ENCODE measurements at regions of chr20 and their contacts with region 1.

Region 1: GRCh38 chr20:17504898-17505635 is 26.1 kb downstream of the BFSP1 start:
- DNase-seq: peak; percentile 47
- ATAC-seq: peak; percentile 90
- H3K4me3 ChIP-seq: peak overlapping the region; percentile 36 to 54
- H3K27ac ChIP-seq: peak overlapping the region; percentile 79
- H3K4me1 ChIP-seq: peaks cover 13% of the 10 kb centered on the region; the same call in 1 of the 2 replicates
- H3K27me3 ChIP-seq: no peaks in the 10 kb centered on the region
- CTCF ChIP-seq: peak; percentile 76

Region 2: DNA sequence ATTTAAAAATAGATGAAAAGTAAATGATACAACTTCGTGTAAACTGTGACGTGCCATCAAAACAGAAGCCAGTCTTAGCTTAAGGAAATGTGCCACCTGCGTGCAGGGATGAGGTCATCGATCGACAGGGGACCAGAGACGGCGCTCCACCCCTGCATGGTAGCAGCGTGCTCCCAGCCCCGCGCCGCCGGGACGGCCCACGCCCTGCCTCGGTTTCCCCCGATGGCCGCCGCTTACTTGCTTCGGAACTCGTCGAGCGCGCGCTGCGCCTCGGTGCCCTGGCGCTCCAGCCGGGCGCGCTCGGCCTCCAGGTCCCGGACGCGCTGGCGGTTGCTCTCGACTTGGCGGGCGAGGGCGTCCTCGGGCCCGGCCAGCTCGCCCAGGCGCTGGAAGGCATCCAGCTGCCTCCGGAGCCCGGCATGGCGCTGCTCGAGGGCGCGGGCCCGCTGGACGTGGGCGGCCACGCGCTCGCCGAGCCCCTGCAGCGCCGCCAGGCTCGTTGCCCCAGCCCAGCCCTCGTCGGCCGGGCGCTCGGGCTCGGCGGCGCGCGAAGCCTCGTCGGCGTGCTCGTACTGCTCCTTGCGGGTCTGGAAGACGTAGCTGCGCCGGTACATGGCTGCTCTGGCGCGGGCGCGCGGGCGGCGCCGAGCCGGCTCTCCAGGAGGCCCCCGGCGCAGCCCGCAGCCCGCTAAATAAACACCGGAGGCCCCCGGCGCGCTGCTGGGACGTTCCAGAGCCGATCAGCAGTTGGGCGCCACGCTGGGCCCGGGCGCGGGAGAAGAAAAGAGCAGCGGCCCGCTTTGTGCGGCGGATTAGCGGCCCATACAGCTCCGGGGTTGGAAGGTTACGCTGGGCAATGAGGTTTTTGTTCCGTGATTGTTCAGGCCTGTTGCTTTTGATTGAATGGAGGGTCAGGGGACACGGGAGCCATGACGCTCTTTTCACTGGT is 25.9 kb after region 1 on chr20 and contains the start of gene BFSP1:
- CTCF ChIA-PET with region 1: no interaction called
- POLR2A ChIA-PET with region 1: no interaction called
- in situ Hi-C with region 1: no loop called
- intact Hi-C with region 1: no loop called
- DNase-seq: no peak
- ATAC-seq: peak; percentile 89
- H3K4me3 ChIP-seq: peak within 1 kb of the TSS; percentile 51 to 77
- H3K27ac ChIP-seq: peak within 1 kb of the TSS; percentile 88
- H3K4me1 ChIP-seq: peaks cover 24% of the 10 kb centered on the region
- H3K27me3 ChIP-seq: no peaks in the 10 kb centered on the region
- CTCF ChIP-seq: peak; percentile 13; the same call in 1 of the 2 replicates
- total RNA-seq, gene BFSP1: 6.9 TPM

Region 3: GRCh38 chr20:17617551-17618223 is 112.6 kb after region 1 on chr20:
- CTCF ChIA-PET with region 1: interaction called, 4 read pairs
- POLR2A ChIA-PET with region 1: no interaction called
- in situ Hi-C with region 1: no loop called
- intact Hi-C with region 1: loop called (anchors 1 kb)
- DNase-seq: peak; percentile 13
- ATAC-seq: peak; percentile 68
- H3K4me3 ChIP-seq: no peak overlapping the region
- H3K27ac ChIP-seq: no peak overlapping the region
- H3K4me1 ChIP-seq: peaks cover 29% of the 10 kb centered on the region
- H3K27me3 ChIP-seq: no peaks in the 10 kb centered on the region
- CTCF ChIP-seq: peak; percentile 93

Region 4: GRCh38 chr20:17898548-17898994 is 393.5 kb after region 1 on chr20:
- CTCF ChIA-PET with region 1: no interaction called
- POLR2A ChIA-PET with region 1: no interaction called
- in situ Hi-C with region 1: no loop called
- intact Hi-C with region 1: loop called (anchors 5 kb)
- DNase-seq: peak; percentile 53
- ATAC-seq: peak; percentile 86
- H3K4me3 ChIP-seq: no peak overlapping the region
- H3K27ac ChIP-seq: no peak overlapping the region
- H3K4me1 ChIP-seq: no peaks in the 10 kb centered on the region
- H3K27me3 ChIP-seq: no peaks in the 10 kb centered on the region
- CTCF ChIP-seq: peak; percentile 95

Region 5: GRCh38 chr20:17938871-17939619 is 434.0 kb after region 1 on chr20:
- CTCF ChIA-PET with region 1: no interaction called
- POLR2A ChIA-PET with region 1: no interaction called
- in situ Hi-C with region 1: no loop called
- intact Hi-C with region 1: loop called (anchors 1 kb)
- DNase-seq: peak; percentile 48
- ATAC-seq: peak; percentile 89
- H3K4me3 ChIP-seq: no peak overlapping the region
- H3K27ac ChIP-seq: peak overlapping the region; percentile 52; the same call in 1 of the 2 replicates
- H3K4me1 ChIP-seq: peaks cover 39% of the 10 kb centered on the region
- H3K27me3 ChIP-seq: no peaks in the 10 kb centered on the region
- CTCF ChIP-seq: peak; percentile 94

Region 6: GRCh38 chr20:17995967-17996819 is 491.1 kb after region 1 on chr20:
- CTCF ChIA-PET with region 1: interaction called, 4 read pairs
- POLR2A ChIA-PET with region 1: no interaction called
- in situ Hi-C with region 1: no loop called
- intact Hi-C with region 1: loop called (anchors 10 kb)
- DNase-seq: no peak
- ATAC-seq: peak; percentile 80
- H3K4me3 ChIP-seq: peak overlapping the region in 1 of 2 experiments; percentile 31; a peak in 2 of 4 replicates
- H3K27ac ChIP-seq: no peak overlapping the region
- H3K4me1 ChIP-seq: no peaks in the 10 kb centered on the region; the same call in 1 of the 2 replicates
- H3K27me3 ChIP-seq: no peaks in the 10 kb centered on the region
- CTCF ChIP-seq: peak; percentile 98